ENCODE measurements at regions of chr6 and their contacts with region 1.

Region 1: DNA sequence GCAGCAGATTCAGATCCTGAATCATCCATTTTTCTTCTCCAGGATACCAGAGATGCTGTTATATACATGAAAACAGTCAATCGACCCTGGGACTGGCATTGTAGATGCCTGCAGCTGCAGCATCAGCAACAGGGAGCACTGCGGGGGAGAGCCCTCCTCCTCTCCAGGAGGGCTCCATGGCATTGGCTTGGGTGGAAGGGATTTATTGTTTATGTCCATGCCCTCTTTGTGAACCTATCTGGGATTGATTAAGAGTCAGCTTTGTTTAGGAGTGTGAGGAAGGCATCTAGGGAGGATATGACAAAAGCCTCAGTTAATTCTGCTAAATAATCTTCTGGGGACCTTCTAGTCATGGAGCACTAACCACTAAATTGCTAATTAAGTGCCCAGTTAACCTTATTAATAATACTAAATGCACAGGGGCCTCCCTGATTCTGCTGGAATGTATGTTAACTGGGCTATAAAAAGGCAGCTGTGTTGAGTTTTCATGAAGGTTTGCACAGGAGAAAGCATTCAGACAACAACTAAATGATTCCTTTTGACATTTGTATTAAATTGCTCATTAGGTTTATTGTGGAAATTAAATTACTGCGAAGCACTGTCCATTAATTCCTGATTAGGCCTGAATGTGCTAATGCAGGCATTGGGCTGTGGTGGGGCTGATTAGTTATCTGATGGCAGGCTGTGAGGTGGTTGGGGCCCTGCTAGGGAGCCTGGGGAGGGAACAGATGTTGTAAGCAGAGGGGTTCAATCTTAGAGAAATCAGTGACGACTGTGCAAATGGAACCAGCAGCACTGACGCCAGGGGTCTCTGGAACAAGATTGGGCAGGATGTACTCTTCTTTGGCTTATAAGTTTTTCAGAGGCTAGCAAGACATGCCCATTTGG is 57.6 kb downstream of the IMPG1 start:
- DNase-seq: no peak
- H3K4me3 ChIP-seq: no peak overlapping the region
- H3K4me3 Mint-ChIP-seq: no peak overlapping the region
- H3K27ac ChIP-seq: no peak overlapping the region
- H3K27ac Mint-ChIP-seq: no peak overlapping the region
- H3K4me1 ChIP-seq: no peaks in the 10 kb centered on the region
- H3K4me1 Mint-ChIP-seq: no peaks in the 10 kb centered on the region
- H3K27me3 ChIP-seq: no peaks in the 10 kb centered on the region
- H3K27me3 Mint-ChIP-seq: no peaks in the 10 kb centered on the region
- CTCF ChIP-seq: no peak

Region 2: GRCh38 chr6:76043690-76044089 is 28.8 kb after region 1 on chr6:
- intact Hi-C with region 1: loop called in 1 of 2 experiments (anchors 2 kb)
- DNase-seq: no peak
- H3K4me3 ChIP-seq: no peak overlapping the region
- H3K4me3 Mint-ChIP-seq: no peak overlapping the region
- H3K27ac ChIP-seq: no peak overlapping the region
- H3K27ac Mint-ChIP-seq: no peak overlapping the region
- H3K4me1 ChIP-seq: no peaks in the 10 kb centered on the region
- H3K4me1 Mint-ChIP-seq: no peaks in the 10 kb centered on the region
- H3K27me3 ChIP-seq: no peaks in the 10 kb centered on the region
- H3K27me3 Mint-ChIP-seq: peaks cover 0 to 3% (median 0%) of the 10 kb centered on the region in 3 donors
- CTCF ChIP-seq: no peak